ENCODE measurements at regions of chr4 and their contacts with region 1.

Region 1: DNA sequence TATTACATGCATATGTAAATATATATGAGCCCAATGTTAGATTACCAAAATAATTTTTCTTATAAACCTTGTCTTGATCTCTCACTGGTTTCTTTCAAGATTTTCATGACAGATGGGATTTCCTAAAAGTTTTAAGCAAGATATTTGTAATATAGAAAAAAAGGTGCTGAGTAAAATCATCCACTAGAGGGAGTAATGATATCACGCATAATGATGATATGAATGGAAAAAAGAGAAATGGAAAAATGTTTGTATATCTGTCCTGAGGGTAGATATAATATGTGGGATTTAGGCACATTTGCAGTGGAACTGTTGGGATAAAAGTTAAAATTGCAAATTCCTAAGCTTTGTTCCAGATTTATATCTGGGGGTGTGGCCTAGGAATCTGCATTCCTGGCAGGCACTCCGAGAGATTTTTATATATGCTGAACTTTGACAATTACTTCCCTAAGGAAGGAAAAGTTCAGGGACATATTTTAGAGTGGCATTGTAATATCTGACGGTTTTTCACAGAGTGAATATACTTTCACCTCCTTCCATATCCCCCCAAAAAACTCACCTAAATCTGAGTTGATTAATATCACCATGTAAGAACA is 60.5 kb downstream of the TMA16 start:
- DNase-seq: no peak
- H3K4me3 ChIP-seq: no peak overlapping the region
- H3K27ac ChIP-seq: no peak overlapping the region
- H3K4me1 ChIP-seq: peaks cover 6% of the 10 kb centered on the region
- H3K27me3 ChIP-seq: no peaks in the 10 kb centered on the region
- CTCF ChIP-seq: peak in 1 of 3 experiments; percentile 77
- POLR2A ChIP-seq: no peak

Region 2: GRCh38 chr4:163448516-163449197 is 106.3 kb before region 1 on chr4:
- intact Hi-C with region 1: no loop called
- DNase-seq: no peak
- H3K4me3 ChIP-seq: no peak overlapping the region
- H3K27ac ChIP-seq: no peak overlapping the region
- H3K4me1 ChIP-seq: no peaks in the 10 kb centered on the region
- H3K27me3 ChIP-seq: no peaks in the 10 kb centered on the region
- CTCF ChIP-seq: no peak
- POLR2A ChIP-seq: no peak

Region 3: DNA sequence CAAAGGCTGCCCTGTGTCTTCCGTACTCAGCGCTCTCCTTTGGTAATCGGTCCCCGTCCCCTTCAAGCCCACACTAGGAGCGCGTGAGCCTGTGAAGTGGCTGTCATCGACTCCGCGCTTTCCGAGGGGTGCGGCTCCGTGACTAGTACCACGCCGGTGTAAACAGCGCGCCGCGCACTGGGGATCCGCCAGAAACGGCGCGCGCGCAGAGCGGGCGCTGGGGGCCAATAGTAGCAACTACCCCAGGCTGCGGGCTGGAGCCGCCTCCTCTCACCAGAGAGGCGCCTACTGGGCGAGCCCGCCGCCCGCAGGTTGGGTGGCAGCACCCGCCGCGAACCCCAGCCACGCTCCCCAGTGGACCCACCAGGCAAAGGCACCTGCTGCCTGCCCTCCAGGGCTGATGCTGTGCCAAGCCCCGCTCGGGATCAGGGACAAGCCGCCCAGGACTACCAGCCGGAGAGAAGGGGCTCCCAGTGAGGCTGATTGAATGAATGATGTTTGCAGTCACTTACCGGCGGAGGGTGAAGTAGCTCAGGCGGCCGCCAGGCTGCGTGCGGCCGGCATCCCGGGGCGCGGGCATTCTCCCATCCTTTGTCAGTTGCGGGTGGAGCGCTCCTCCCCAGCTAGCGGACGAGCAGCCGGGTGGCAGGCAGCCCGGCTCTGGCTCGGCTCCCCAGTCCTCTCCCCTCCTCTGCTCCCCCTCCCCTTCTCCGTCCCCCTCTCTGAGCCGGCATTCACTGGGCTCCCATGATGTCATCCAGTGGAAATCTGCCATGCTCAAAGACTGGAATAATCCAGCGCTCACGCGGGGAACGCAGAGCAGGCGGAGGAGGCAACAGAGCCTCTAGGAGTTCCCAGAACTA is 828.6 kb after region 1 on chr4:
- intact Hi-C with region 1: no loop called
- DNase-seq: peak; percentile 51
- H3K4me3 ChIP-seq: peak overlapping the region; percentile 34 to 51
- H3K27ac ChIP-seq: no peak overlapping the region
- H3K4me1 ChIP-seq: no peaks in the 10 kb centered on the region
- H3K27me3 ChIP-seq: no peaks in the 10 kb centered on the region
- CTCF ChIP-seq: no peak
- POLR2A ChIP-seq: no peak

Region 4: GRCh38 chr4:164731827-164732474 is 1177.0 kb after region 1 on chr4:
- intact Hi-C with region 1: loop called (anchors 10 kb)
- DNase-seq: peak; percentile 56
- H3K4me3 ChIP-seq: no peak overlapping the region
- H3K27ac ChIP-seq: no peak overlapping the region
- H3K4me1 ChIP-seq: no peaks in the 10 kb centered on the region
- H3K27me3 ChIP-seq: no peaks in the 10 kb centered on the region
- CTCF ChIP-seq: peak; percentile 31 to 67 (median 60)
- POLR2A ChIP-seq: no peak

Measured in testis (tissue), 5 donors.